MCF 10A (cell line): ENCODE measurements at regions of chr5 and their contacts with region 1.

Region 1: GRCh38 chr5:155616779-155617392 is 603.3 kb downstream of the KIF4B start:
- DNase-seq: peak; percentile 33
- H3K4me3 Mint-ChIP-seq: no peak overlapping the region
- H3K27ac Mint-ChIP-seq: no peak overlapping the region
- H3K4me1 Mint-ChIP-seq: no peaks in the 10 kb centered on the region
- H3K27me3 Mint-ChIP-seq: no peaks in the 10 kb centered on the region
- CTCF ChIP-seq: peak; percentile 99

Region 2: GRCh38 chr5:155562158-155562557 is 54.7 kb before region 1 on chr5:
- CTCF ChIA-PET with region 1: no interaction called
- POLR2A ChIA-PET with region 1: no interaction called
- intact Hi-C with region 1: no loop called
- DNase-seq: no peak
- H3K4me3 Mint-ChIP-seq: no peak overlapping the region
- H3K27ac Mint-ChIP-seq: no peak overlapping the region
- H3K4me1 Mint-ChIP-seq: peaks cover 5% of the 10 kb centered on the region
- H3K27me3 Mint-ChIP-seq: no peaks in the 10 kb centered on the region
- CTCF ChIP-seq: no peak

Region 3: DNA sequence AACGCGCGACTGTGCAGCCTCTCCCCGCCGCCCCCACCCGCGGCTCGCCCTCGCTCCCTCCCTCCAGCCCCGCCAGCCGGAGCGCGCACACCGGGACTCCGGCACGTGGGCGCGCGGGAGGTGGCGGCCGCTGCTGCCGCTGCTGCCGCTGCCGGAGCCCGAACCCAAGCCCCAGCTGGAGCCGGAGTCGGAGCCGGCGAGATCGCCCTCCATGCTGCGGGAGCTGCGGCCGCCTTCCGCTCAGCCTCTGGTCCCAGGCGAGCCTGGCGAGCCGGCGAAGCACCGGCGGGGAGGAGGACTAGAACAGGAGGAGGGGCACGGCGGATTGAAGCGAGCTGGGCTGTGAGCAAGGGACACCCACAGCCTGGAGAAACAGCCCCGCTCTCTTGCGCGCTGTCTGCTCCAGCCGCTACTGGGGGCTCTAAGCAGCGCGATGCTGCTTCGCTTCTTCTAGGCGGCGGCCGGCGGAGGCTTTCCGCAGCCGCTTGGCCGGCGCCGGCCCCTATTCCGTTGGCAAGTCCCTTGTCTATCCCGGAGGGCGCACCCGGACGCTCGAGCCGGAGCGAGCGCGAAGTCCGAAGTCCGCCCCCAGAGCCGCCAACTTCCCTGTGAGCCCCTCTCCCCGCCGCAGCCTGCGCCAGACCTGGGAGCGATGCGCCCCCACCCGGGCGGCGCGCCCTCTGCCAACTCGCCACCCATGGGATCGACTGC is 111.4 kb after region 1 on chr5:
- CTCF ChIA-PET with region 1: no interaction called
- POLR2A ChIA-PET with region 1: no interaction called
- intact Hi-C with region 1: no loop called
- DNase-seq: no peak
- H3K4me3 Mint-ChIP-seq: peak overlapping the region; percentile 58
- H3K27ac Mint-ChIP-seq: no peak overlapping the region
- H3K4me1 Mint-ChIP-seq: peaks cover 6% of the 10 kb centered on the region
- H3K27me3 Mint-ChIP-seq: peaks cover 87% of the 10 kb centered on the region
- CTCF ChIP-seq: no peak

Region 4: DNA sequence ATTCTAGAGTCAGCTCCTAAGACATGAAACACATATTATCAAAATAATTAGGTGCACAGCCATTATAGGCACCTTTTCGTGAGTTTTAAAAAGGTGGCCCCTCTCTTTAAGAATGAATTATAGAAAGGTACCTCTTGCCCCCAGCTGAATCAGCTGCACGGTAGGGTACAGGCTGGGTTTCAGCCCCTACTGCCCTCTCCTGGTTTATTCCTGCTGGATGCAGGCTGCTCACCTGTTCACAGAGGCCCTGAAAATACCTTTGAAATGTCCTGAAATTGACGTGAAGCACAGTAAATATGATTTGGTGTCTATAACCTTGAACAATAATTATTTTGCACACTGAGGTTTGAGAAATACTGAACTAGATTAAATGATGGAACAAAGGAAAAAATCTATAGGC is 205.3 kb after region 1 on chr5:
- CTCF ChIA-PET with region 1: interaction called, 3 read pairs
- POLR2A ChIA-PET with region 1: no interaction called
- intact Hi-C with region 1: loop called (anchors 5 kb)
- DNase-seq: no peak
- H3K4me3 Mint-ChIP-seq: no peak overlapping the region
- H3K27ac Mint-ChIP-seq: no peak overlapping the region
- H3K4me1 Mint-ChIP-seq: no peaks in the 10 kb centered on the region
- H3K27me3 Mint-ChIP-seq: no peaks in the 10 kb centered on the region
- CTCF ChIP-seq: peak; percentile 21

Region 5: DNA sequence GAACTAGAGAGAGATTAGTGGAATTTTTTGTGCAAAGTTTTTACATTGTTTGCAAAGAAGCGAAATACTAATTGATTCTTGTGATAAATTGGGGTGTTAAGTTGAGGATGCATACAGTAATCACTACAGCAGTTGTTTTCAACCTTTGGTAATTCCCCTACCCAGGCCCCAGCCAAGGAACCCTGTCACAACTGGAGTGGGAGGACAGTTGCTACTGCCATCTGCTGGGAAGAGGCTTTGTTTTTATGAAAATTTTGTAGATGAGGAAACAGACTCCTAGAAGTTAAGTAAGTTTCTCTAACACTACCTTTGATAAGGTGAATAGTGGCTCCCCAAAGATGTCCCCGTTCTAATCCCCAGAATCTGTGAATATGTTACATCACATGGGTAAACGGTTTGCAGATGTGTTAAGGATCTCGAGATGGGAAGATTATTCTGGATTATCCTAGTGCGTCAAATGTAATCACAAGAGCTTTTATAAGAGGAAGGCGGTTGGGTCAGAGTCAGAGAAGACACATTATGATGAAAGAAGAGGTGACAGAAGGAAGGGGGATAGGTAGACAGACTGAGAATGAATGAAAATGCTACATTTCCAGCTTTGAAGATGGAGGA is 1199.2 kb after region 1 on chr5:
- CTCF ChIA-PET with region 1: interaction called, 5 read pairs
- POLR2A ChIA-PET with region 1: no interaction called
- intact Hi-C with region 1: loop called (anchors 1 kb)
- DNase-seq: peak; percentile 8
- H3K4me3 Mint-ChIP-seq: no peak overlapping the region
- H3K27ac Mint-ChIP-seq: no peak overlapping the region
- H3K4me1 Mint-ChIP-seq: no peaks in the 10 kb centered on the region
- H3K27me3 Mint-ChIP-seq: no peaks in the 10 kb centered on the region
- CTCF ChIP-seq: peak; percentile 69

Region 6: DNA sequence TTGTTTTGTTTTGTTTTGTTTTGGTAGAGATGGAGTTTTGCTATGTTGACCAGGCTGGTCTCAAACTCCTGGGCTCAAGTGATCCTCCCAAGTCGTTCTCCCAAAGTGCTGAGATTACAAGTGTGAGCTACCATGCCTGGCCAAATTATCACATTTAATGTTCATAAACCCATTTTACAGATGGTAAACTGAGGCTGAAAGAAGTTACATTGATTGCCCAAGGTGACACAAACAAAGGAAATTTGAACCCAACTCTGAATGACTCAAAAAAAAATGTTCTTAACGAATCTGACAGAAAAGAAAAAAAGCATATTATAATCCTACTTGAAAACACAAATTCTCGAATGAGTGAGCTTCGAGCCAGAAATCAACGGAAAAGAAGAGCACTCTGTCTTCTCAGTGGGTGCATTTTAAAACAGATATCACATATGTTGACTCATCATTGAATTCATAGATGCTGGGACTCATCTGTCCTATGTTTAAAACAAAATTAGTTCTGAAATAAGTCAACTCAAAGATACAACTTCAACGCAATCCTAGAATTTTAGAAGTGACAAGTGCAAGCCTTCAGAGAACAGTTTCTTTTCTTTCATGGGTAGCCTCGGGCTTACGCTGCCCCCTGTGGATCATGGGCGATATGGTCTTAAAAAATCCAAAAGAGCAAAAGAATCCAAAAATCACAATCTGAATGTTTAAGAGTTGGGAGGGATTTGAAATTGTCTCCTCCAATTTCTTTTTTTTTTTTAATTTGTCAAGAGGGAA is 1317.7 kb after region 1 on chr5:
- CTCF ChIA-PET with region 1: no interaction called
- POLR2A ChIA-PET with region 1: no interaction called
- intact Hi-C with region 1: loop called (anchors 2 kb)
- DNase-seq: no peak
- H3K4me3 Mint-ChIP-seq: no peak overlapping the region
- H3K27ac Mint-ChIP-seq: no peak overlapping the region
- H3K4me1 Mint-ChIP-seq: no peaks in the 10 kb centered on the region
- H3K27me3 Mint-ChIP-seq: peaks cover 18% of the 10 kb centered on the region
- CTCF ChIP-seq: peak; percentile 51

Region 7: DNA sequence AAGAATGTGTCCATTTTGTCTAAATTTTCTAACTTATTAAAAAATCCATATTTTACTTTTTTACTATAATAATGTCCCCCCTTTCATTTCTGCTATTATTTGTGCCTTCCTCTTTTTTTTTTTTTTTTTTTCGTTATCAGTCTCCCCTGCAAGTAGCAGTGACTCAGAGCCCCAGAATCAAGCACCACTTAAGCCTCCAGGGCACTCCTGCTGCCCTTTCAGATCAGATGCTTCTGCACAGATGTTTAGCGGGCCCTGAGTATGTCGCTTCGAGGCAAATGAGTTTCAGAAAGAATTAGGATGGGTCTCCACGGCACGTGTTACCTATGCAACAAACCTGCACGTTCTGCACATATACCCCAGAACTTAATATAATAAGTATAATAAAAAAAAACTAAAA is 1514.0 kb after region 1 on chr5:
- CTCF ChIA-PET with region 1: no interaction called
- POLR2A ChIA-PET with region 1: no interaction called
- intact Hi-C with region 1: loop called (anchors 2 kb)
- DNase-seq: no peak
- H3K4me3 Mint-ChIP-seq: no peak overlapping the region
- H3K27ac Mint-ChIP-seq: no peak overlapping the region
- H3K4me1 Mint-ChIP-seq: no peaks in the 10 kb centered on the region
- H3K27me3 Mint-ChIP-seq: no peaks in the 10 kb centered on the region
- CTCF ChIP-seq: no peak